PC-9 (cell line): ENCODE measurements at regions of chr3 and their contacts with region 1.

Region 1: GRCh38 chr3:194592798-194593752 is 40.1 kb downstream of the TMEM44 start:
- DNase-seq: peak; percentile 81 to 100
- H3K4me3 ChIP-seq: no peak overlapping the region
- H3K27ac ChIP-seq: peak overlapping the region; percentile 59
- H3K4me1 ChIP-seq: peaks cover 22% of the 10 kb centered on the region
- H3K27me3 ChIP-seq: no peaks in the 10 kb centered on the region
- CTCF ChIP-seq: no peak

Region 2: GRCh38 chr3:194189243-194189791 is 403.8 kb before region 1 on chr3:
- CTCF ChIA-PET with region 1: no interaction called
- POLR2A ChIA-PET with region 1: no interaction called
- intact Hi-C with region 1: no loop called
- DNase-seq: no peak
- H3K4me3 ChIP-seq: no peak overlapping the region
- H3K27ac ChIP-seq: no peak overlapping the region
- H3K4me1 ChIP-seq: peaks cover 7% of the 10 kb centered on the region
- H3K27me3 ChIP-seq: no peaks in the 10 kb centered on the region
- CTCF ChIP-seq: no peak

Region 3: GRCh38 chr3:194333212-194333980 is 259.7 kb before region 1 on chr3:
- CTCF ChIA-PET with region 1: no interaction called
- POLR2A ChIA-PET with region 1: interaction called, 15 read pairs
- intact Hi-C with region 1: loop called (anchors 5 kb)
- DNase-seq: peak; percentile 78 to 95
- H3K4me3 ChIP-seq: peak overlapping the region; percentile 57
- H3K27ac ChIP-seq: no peak overlapping the region; the same call in 1 of the 2 replicates
- H3K4me1 ChIP-seq: peaks cover 19% of the 10 kb centered on the region
- H3K27me3 ChIP-seq: no peaks in the 10 kb centered on the region
- CTCF ChIP-seq: peak; percentile 100

Region 4: GRCh38 chr3:194486540-194487288 is 106.4 kb before region 1 on chr3 and contains the start of gene ATP13A3:
- CTCF ChIA-PET with region 1: interaction called, 4 read pairs
- POLR2A ChIA-PET with region 1: interaction called, 8 read pairs
- intact Hi-C with region 1: loop called (anchors 1 kb)
- DNase-seq: peak; percentile 80 to 93
- H3K4me3 ChIP-seq: peak within 1 kb of the TSS; percentile 64
- H3K27ac ChIP-seq: peak within 1 kb of the TSS; percentile 96
- H3K4me1 ChIP-seq: peaks cover 71% of the 10 kb centered on the region
- H3K27me3 ChIP-seq: no peaks in the 10 kb centered on the region
- CTCF ChIP-seq: no peak
- total RNA-seq, gene ATP13A3: 203 and 242 TPM in 2 replicates

Region 5: GRCh38 chr3:194504861-194505260 is 88.2 kb before region 1 on chr3:
- CTCF ChIA-PET with region 1: no interaction called
- POLR2A ChIA-PET with region 1: no interaction called
- intact Hi-C with region 1: no loop called
- DNase-seq: no peak
- H3K4me3 ChIP-seq: no peak overlapping the region
- H3K27ac ChIP-seq: no peak overlapping the region
- H3K4me1 ChIP-seq: no peaks in the 10 kb centered on the region
- H3K27me3 ChIP-seq: no peaks in the 10 kb centered on the region
- CTCF ChIP-seq: no peak

Region 6: DNA sequence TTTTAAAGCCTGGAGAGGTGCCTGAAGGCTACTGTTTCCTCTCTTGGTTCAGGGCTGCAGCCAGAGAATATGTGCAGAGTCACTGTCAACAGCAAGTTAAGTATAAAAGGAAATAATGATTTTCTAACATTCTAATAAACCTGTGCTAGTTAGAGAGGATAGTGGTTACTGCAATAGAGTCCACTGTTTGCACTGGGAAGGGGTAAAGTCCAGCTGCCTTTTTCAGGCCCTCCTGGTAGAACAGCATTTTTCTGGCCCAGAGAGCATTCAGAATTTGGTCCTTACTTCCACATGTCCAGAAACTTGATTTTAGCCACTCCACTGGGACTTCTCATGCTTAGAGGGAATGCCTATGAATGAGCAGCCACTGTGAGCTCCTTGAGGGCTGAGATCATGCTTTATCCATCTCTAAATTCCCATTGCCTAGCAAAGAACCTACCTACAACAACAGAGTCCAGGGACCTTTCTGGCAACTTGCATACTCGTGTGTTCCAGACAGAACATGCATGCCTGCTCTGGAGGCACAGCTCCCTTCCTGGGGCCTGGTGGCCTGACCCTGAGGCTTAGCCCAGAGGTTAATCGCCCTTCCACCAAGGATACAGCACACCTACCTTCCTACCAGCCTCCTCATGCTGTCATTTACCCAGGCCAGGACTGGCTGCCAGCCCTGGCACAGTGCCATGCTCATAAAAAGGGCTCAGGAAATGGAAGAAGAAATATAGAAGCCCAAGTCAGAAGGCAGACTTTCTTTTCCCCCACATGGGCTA is 56.0 kb before region 1 on chr3:
- CTCF ChIA-PET with region 1: interaction called, 13 read pairs
- POLR2A ChIA-PET with region 1: no interaction called
- intact Hi-C with region 1: loop called (anchors 1 kb)
- DNase-seq: peak; percentile 69 to 79
- H3K4me3 ChIP-seq: peak overlapping the region; percentile 9; the same call in 1 of the 2 replicates
- H3K27ac ChIP-seq: peak overlapping the region; percentile 86
- H3K4me1 ChIP-seq: peaks cover 38% of the 10 kb centered on the region
- H3K27me3 ChIP-seq: no peaks in the 10 kb centered on the region
- CTCF ChIP-seq: no peak

Region 7: DNA sequence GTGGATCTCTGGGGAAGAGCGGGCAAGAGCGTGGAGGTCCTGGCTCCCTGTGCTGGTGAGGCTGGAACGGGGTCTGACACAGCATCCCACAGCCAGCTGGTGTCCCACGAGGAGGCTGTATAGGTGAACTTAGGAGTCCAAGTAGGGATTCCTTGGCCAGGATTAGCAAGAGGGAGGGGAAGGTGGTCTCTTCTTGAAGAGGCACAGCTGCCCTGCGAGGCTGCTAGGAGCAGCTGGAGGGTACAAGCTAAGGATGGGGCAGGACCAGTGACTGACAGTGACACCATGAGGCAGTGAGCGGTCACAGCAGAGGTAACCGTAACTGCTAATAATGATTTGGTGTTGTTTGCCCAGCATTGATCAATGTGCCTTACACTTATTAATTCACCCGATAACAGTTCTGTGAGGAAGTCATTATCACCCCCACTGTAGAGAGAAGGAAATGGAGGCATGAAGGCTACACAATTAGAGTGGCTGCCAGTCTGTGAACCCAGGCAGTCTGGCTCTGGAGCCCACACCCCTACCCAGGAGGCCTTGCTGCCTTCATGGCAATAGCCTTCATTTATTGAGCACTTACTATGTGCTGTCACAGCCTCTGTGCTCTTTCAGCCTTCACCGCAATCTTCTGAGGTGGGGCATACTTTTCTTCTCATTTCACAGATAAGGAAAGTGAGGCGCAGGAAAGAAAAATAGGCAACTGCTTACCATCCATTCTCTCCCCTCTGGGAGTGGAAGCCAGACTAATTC is 19.2 kb before region 1 on chr3:
- CTCF ChIA-PET with region 1: interaction called, 14 read pairs
- POLR2A ChIA-PET with region 1: interaction called, 3 read pairs
- intact Hi-C with region 1: no loop called
- DNase-seq: peak in 1 of 2 experiments; percentile 29
- H3K4me3 ChIP-seq: no peak overlapping the region
- H3K27ac ChIP-seq: no peak overlapping the region
- H3K4me1 ChIP-seq: peaks cover 71% of the 10 kb centered on the region
- H3K27me3 ChIP-seq: no peaks in the 10 kb centered on the region
- CTCF ChIP-seq: peak; percentile 63